Sciatic nerve (tissue), 2 donors: ENCODE measurements at regions of chr2 and their contacts with region 1.

Region 1: GRCh38 chr2:127695491-127696472 is 5.5 kb upstream of the SFT2D3 start:
- DNase-seq: peak; percentile 80
- ATAC-seq: peak; percentile 69

Region 2: DNA sequence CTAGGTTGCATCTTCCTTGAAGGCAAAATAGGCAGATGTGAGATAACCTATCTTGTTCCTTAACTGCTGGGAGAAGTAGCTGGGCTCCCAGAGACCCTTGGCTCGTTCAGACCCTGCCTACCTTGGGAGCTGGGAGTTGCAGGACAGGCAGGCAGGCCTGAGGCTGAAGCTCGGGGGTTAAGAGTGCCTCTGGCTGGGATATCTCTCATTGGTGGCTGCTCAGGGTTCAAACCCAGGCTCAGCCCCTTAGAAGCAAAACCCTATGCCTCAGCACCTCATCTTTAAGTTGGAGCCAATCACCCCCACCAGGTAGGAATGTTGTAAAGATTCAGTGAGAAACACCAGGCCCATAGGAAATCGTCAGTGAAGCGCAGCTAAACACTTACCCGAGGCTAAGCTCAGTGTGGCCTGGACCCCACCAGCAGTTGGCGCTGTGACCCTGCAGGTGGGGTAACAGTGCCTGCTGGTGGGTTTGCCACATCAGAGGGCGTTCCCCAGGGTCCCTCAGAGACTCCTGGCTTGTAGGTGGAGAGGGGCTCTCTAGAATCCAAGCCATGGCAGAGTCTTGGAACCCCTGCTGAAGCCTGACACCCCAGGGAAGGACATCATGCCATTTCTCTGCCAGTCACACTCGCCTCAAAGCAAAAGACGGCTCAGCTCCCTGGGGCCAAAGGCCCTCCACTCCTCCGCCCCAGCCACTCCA is 104.4 kb before region 1 on chr2:
- intact Hi-C with region 1: loop called (anchors 10 kb)
- DNase-seq: peak; percentile 69
- ATAC-seq: peak; percentile 78

Region 3: DNA sequence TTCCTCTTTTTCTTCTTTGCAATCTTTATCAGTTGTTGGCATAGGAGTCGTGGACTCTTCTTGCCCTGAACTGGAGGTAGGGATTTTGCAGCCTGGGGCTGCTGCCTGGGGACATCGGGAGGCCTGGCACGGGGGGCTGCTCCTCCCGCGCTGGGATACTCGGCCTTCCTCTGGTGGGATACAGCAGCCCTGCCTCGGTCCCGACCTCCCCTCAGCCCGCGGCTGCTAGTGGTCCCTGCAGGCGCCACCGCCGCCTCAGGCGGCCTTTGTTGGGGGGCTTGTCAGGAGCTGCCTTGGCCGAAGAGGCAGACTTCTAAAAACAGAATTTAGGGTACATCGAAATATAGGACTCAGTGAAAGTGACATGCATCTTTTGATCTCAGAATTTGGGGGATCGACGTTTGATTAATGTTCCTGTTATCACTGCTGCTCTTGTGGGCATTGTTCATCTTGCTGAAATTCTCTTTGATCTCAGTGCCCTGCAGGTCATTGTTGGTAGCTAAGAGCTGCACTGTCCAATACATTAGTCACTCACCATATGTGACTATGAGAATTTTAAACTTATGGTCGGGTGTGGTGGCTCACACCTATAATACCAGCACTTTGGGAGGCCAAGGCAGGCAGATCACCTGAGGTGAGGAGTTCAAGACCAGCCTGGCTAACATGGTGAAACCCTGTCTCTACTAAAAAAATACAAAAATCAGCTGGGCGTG is 145.8 kb after region 1 on chr2:
- intact Hi-C with region 1: no loop called
- DNase-seq: no peak
- ATAC-seq: no peak